ENCODE measurements at regions of chr1 and their contacts with region 1.

Region 1: DNA sequence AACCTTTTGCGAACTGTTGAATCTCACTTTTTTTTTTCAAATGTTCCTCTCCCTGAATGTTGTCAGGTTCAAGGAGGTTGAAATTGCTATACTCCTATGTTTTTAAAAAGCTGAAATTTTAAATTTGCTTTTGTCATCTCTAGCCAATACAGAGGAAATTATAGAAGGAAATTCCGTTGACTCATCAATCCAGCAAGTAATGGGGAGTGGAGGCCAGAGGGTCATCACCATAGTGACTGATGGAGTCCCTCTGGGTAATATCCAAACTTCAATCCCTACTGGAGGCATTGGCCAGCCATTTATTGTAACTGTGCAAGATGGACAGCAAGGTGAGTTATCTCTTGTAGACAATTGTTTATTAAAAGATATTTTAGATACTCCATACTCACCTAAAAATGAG is 36.3 kb downstream of the GABPB2 start:
- DNase-seq: peak; percentile 73
- H3K4me3 ChIP-seq: no peak overlapping the region
- H3K27ac ChIP-seq: peak overlapping the region; percentile 38
- H3K4me1 ChIP-seq: peaks cover 10% of the 10 kb centered on the region
- H3K27me3 ChIP-seq: no peaks in the 10 kb centered on the region
- CTCF ChIP-seq: no peak
- POLR2A ChIP-seq: no peak

Region 2: GRCh38 chr1:151085953-151086559 is 20.8 kb before region 1 on chr1:
- CTCF ChIA-PET with region 1: interaction called, 66 read pairs
- POLR2A ChIA-PET with region 1: no interaction called
- dilution Hi-C with region 1: no loop called
- intact Hi-C with region 1: no loop called
- DNase-seq: no peak
- H3K4me3 ChIP-seq: no peak overlapping the region
- H3K27ac ChIP-seq: no peak overlapping the region
- H3K4me1 ChIP-seq: no peaks in the 10 kb centered on the region
- H3K27me3 ChIP-seq: no peaks in the 10 kb centered on the region
- CTCF ChIP-seq: no peak
- POLR2A ChIP-seq: no peak

Region 3: GRCh38 chr1:151156515-151156819 is 49.6 kb after region 1 on chr1 and contains the start of gene TNFAIP8L2:
- CTCF ChIA-PET with region 1: interaction called, 623 read pairs
- POLR2A ChIA-PET with region 1: no interaction called
- dilution Hi-C with region 1: no loop called
- intact Hi-C with region 1: no loop called
- DNase-seq: no peak
- H3K4me3 ChIP-seq: no peak within 1 kb of the TSS
- H3K27ac ChIP-seq: peak within 1 kb of the TSS; percentile 25
- H3K4me1 ChIP-seq: peaks cover 18% of the 10 kb centered on the region
- H3K27me3 ChIP-seq: no peaks in the 10 kb centered on the region
- CTCF ChIP-seq: no peak
- POLR2A ChIP-seq: no peak
- total RNA-seq, gene TNFAIP8L2: not detected in 2 replicates

Measured in endothelial cell of umbilical vein (primary cell).